B cell (primary cell): ENCODE measurements at regions of chr3 and their contacts with region 1.

Region 1: DNA sequence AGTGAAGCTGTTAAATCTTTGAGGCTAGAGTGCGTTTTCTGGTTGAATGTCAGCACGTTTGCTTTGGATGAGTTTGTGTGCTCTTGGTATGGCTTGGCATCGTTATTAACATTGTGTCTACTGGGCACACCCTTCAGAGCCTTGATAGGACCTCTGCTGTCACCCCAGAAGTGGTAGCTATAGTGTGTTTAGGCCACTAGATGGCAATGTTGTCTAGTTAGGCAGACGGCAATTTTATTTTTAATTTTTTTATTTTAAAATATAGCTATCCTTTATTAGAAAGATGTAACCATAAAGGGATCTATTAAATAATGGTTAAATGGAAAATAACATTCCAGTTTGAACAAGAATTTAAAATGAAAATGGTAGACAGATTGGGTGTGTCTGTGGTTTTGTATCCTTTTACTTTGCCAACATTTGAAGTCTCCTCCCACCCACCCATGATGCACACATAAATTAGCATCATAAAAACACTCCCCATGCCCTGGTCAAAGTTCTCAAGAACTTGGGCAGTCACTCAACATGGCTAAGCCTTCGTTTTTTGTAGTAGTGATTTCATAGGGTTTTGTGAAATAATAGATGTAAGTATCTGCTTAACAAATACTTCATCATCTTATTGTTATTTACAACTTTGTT is 200.7 kb downstream of the KCNH8 start:
- DNase-seq: peak; percentile 60
- ATAC-seq: peak; percentile 76
- H3K4me3 ChIP-seq: peak overlapping the region in 4 of 5 experiments; percentile 23 to 61 (median 42)
- H3K4me3 Mint-ChIP-seq: peak overlapping the region; percentile 80
- H3K27ac ChIP-seq: peak overlapping the region; percentile 75 to 77
- H3K27ac Mint-ChIP-seq: peak overlapping the region; percentile 96
- H3K4me1 ChIP-seq: peaks cover 30 to 38% of the 10 kb centered on the region in 2 donors
- H3K4me1 Mint-ChIP-seq: peaks cover 44% of the 10 kb centered on the region
- H3K27me3 ChIP-seq: no peaks in the 10 kb centered on the region
- H3K27me3 Mint-ChIP-seq: no peaks in the 10 kb centered on the region
- CTCF ChIP-seq: peak; percentile 83

Region 2: DNA sequence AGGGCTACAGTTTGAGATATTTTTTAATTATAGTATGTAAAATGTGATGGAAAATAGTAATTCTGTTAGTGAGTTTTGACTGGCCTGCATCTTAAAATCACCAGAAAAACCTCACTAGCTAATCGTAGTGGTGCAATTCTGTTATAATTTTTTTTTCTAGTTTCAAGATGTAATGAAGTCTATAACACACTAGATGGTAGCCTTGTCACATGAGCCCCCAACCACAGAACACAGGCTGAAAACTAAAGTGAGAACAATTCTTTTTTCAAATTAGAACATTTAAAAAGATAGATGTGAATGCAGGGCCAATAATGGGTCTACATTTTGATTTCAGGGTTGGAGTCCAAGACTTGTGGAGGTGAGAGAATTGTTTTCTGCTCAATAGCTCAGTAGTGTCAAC is 284.0 kb before region 1 on chr3:
- CTCF ChIA-PET with region 1: interaction called, 5 read pairs
- POLR2A ChIA-PET with region 1: no interaction called
- intact Hi-C with region 1: loop called (anchors 5 kb)
- DNase-seq: peak; percentile 33
- ATAC-seq: no peak
- H3K4me3 ChIP-seq: no peak overlapping the region
- H3K4me3 Mint-ChIP-seq: no peak overlapping the region
- H3K27ac ChIP-seq: no peak overlapping the region
- H3K27ac Mint-ChIP-seq: no peak overlapping the region
- H3K4me1 ChIP-seq: no peaks in the 10 kb centered on the region
- H3K4me1 Mint-ChIP-seq: no peaks in the 10 kb centered on the region
- H3K27me3 ChIP-seq: no peaks in the 10 kb centered on the region
- H3K27me3 Mint-ChIP-seq: peaks cover 5% of the 10 kb centered on the region
- CTCF ChIP-seq: peak; percentile 70

Region 3: DNA sequence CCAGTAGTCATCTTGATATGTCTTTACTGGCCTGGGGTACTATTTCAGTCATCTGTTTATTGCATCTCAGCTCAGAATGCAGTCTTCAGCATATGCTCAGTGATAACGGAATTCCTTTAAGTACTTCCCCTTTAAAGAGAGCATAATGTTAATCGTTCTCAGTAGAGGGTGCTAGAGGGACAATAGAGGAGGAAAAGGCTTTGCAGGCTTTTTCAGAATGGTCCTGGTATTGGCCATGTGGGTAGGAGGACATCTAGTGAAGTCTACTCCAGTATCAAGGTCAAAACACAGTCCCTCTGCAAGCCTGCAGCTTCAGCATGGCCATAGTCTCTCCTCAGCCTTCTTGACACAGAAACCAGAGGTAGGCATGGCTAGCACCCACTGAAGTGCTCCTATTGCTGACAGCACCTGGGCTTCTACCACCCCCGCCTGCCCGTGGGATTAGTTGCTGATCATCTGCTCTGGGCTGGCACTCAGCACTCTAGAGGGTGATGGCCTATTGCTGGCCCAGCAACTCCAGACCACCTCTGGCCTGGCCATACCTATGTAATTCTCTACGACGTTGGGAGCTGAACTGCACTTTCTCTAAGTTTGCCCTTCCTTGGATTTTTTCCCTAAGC is 135.3 kb before region 1 on chr3:
- CTCF ChIA-PET with region 1: interaction called, 6 read pairs
- POLR2A ChIA-PET with region 1: no interaction called
- intact Hi-C with region 1: loop called (anchors 10 kb)
- DNase-seq: peak; percentile 67
- ATAC-seq: peak; percentile 69
- H3K4me3 ChIP-seq: no peak overlapping the region
- H3K4me3 Mint-ChIP-seq: no peak overlapping the region
- H3K27ac ChIP-seq: no peak overlapping the region
- H3K27ac Mint-ChIP-seq: no peak overlapping the region
- H3K4me1 ChIP-seq: peaks cover 0 to 7% of the 10 kb centered on the region in 2 donors
- H3K4me1 Mint-ChIP-seq: peaks cover 4% of the 10 kb centered on the region
- H3K27me3 ChIP-seq: no peaks in the 10 kb centered on the region
- H3K27me3 Mint-ChIP-seq: no peaks in the 10 kb centered on the region
- CTCF ChIP-seq: peak; percentile 58

Region 4: DNA sequence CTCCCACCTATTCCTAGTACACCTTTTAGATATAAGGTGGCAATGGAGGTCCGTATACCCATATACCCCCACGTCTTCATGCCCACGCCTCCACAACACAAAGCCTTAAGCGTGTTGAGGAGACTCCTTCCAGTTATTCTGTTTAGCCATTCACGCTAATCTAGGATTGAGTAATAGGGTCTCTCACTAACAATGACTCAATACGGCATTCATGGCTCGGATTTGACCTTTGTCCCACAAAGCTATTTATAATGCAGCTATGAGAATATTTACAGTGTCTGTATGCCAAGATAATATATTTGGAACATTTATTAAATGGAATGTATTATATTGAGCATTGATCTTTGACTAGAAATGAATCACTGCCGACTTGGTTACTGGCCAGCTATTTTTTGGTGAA is 15.1 kb after region 1 on chr3:
- CTCF ChIA-PET with region 1: interaction called, 13 read pairs
- POLR2A ChIA-PET with region 1: no interaction called
- intact Hi-C with region 1: no loop called
- DNase-seq: no peak
- ATAC-seq: no peak
- H3K4me3 ChIP-seq: no peak overlapping the region
- H3K4me3 Mint-ChIP-seq: no peak overlapping the region
- H3K27ac ChIP-seq: no peak overlapping the region
- H3K27ac Mint-ChIP-seq: peak overlapping the region; percentile 22
- H3K4me1 ChIP-seq: peaks cover 19 to 20% of the 10 kb centered on the region in 2 donors
- H3K4me1 Mint-ChIP-seq: peaks cover 36% of the 10 kb centered on the region
- H3K27me3 ChIP-seq: no peaks in the 10 kb centered on the region
- H3K27me3 Mint-ChIP-seq: no peaks in the 10 kb centered on the region
- CTCF ChIP-seq: no peak

Region 5: DNA sequence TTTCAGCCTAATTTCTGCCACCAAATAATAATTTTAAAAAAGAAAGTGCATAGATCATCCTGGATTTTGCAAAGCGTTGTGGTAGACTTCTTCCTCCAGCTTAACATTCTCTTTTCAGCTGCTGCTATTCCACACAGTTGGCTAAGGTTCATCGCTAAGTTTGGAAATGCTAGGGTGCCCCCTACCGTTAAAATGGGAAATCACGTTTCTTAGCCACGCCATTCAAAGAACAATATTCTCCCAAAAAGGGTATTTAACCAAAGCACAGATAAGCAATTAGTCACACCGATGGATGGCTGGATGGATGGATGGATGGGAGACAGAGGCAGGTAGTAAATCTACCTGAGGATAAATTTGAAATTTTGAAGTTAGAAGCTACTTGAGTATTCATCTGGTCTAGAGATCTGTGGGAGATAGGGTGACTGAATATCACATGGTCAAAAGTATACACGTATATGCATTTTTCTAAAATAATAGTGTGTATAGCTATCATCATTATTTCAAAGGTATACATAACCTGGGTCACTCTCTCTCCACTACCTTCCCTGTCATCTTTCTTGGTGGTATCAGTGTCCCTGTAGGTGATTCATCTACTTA is 517.8 kb after region 1 on chr3:
- CTCF ChIA-PET with region 1: interaction called, 107 read pairs
- POLR2A ChIA-PET with region 1: no interaction called
- intact Hi-C with region 1: no loop called
- DNase-seq: peak; percentile 74
- ATAC-seq: peak; percentile 71
- H3K4me3 ChIP-seq: no peak overlapping the region
- H3K4me3 Mint-ChIP-seq: no peak overlapping the region
- H3K27ac ChIP-seq: no peak overlapping the region
- H3K27ac Mint-ChIP-seq: no peak overlapping the region
- H3K4me1 ChIP-seq: peaks cover 0 to 3% of the 10 kb centered on the region in 2 donors
- H3K4me1 Mint-ChIP-seq: peaks cover 2% of the 10 kb centered on the region
- H3K27me3 ChIP-seq: no peaks in the 10 kb centered on the region
- H3K27me3 Mint-ChIP-seq: peaks cover 8% of the 10 kb centered on the region
- CTCF ChIP-seq: peak; percentile 93

Region 6: DNA sequence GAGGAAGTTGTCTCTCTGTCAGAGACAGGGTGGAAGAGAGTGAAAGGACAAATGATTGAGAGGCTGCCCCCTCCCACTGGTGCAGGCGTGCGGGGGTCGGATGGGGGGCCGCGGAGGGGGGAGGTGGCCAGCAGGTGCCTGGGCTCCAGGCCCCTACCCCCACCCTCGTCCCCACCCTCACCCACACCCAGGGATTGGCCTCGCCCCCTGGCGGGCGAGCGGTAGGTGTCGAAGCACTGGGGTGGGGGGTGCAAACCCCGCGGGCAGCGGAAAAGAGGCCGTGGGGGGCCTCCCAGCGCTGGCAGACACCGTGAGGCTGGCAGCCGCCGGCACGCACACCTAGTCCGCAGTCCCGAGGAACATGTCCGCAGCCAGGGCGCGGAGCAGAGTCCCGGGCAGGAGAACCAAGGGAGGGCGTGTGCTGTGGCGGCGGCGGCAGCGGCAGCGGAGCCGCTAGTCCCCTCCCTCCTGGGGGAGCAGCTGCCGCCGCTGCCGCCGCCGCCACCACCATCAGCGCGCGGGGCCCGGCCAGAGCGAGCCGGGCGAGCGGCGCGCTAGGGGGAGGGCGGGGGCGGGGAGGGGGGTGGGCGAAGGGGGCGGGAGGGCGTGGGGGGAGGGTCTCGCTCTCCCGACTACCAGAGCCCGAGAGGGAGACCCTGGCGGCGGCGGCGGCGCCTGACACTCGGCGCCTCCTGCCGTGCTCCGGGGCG is 690.9 kb after region 1 on chr3 and contains the start of gene KAT2B:
- CTCF ChIA-PET with region 1: no interaction called
- POLR2A ChIA-PET with region 1: no interaction called
- intact Hi-C with region 1: loop called (anchors 5 kb)
- DNase-seq: peak; percentile 93
- ATAC-seq: peak; percentile 74
- H3K4me3 ChIP-seq: peak within 1 kb of the TSS; percentile 68 to 87 (median 84)
- H3K4me3 Mint-ChIP-seq: peak within 1 kb of the TSS; percentile 97
- H3K27ac ChIP-seq: peak within 1 kb of the TSS; percentile 85 to 87
- H3K27ac Mint-ChIP-seq: peak within 1 kb of the TSS; percentile 98
- H3K4me1 ChIP-seq: peaks cover 43 to 50% of the 10 kb centered on the region in 2 donors
- H3K4me1 Mint-ChIP-seq: peaks cover 43% of the 10 kb centered on the region
- H3K27me3 ChIP-seq: no peaks in the 10 kb centered on the region
- H3K27me3 Mint-ChIP-seq: no peaks in the 10 kb centered on the region
- CTCF ChIP-seq: peak; percentile 85
- total RNA-seq, gene KAT2B: 57.5 and 60.3 TPM in 2 replicates

Region 7: GRCh38 chr3:20185701-20186598 is 836.9 kb after region 1 on chr3 and contains the start of gene SGO1:
- CTCF ChIA-PET with region 1: no interaction called
- POLR2A ChIA-PET with region 1: no interaction called
- intact Hi-C with region 1: loop called (anchors 10 kb)
- DNase-seq: peak; percentile 100
- ATAC-seq: peak; percentile 91
- H3K4me3 ChIP-seq: peak within 1 kb of the TSS; percentile 70 to 97 (median 85)
- H3K4me3 Mint-ChIP-seq: no peak within 1 kb of the TSS
- H3K27ac ChIP-seq: peak within 1 kb of the TSS; percentile 98
- H3K27ac Mint-ChIP-seq: no peak within 1 kb of the TSS
- H3K4me1 ChIP-seq: peaks cover 19 to 26% of the 10 kb centered on the region in 2 donors
- H3K4me1 Mint-ChIP-seq: peaks cover 4% of the 10 kb centered on the region
- H3K27me3 ChIP-seq: no peaks in the 10 kb centered on the region
- H3K27me3 Mint-ChIP-seq: no peaks in the 10 kb centered on the region
- CTCF ChIP-seq: no peak
- total RNA-seq, gene SGO1: 6.4 and 6.7 TPM in 2 replicates